ENCODE measurements at regions of chr14 and their contacts with region 1.

Region 1: DNA sequence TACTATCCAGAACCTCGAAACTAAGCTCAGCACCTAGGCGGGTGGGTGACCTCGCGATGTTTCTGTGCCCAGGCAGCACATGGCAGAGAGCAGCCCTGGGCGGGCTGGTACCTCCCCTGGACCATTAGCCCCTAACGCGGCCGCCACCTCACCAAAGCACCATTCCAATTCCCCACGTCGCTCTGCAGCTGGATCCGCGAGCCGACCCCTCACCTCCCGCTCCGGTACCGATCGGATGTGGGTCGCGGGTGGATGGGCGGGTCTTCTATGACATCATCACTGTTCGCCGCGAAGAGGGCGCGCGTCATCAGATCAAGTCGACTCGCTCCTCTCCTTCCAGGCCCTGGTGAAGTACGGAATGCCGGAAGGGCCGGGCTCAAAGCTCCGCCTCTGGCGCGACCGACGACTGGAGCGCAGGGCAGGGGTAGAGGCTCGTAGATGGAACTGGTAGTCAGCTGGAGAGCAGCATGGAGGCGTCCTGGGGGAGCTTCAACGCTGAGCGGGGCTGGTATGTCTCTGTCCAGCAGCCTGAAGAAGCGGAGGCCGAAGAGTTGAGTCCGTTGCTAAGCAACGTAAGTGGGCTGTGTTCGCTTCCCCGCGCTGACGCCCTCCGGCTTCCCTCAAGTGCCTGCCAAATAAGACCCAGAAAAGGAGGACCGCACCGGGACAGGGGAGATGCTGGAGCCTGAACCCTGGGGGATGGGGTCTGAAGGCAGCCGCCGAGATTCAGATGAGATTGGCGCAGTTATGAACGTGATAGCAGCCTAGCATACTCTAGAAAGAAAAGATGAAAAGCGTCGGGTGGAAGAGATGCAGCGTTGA is at the starts of genes SLC38A6 and TRMT5:
- DNase-seq: peak; percentile 84
- H3K4me3 ChIP-seq: peak within 1 kb of the TSS; percentile 83
- CTCF ChIP-seq: no peak

Region 2: GRCh38 chr14:61025251-61026223 is 44.5 kb after region 1 on chr14:
- CTCF ChIA-PET with region 1: interaction called, 11 read pairs
- POLR2A ChIA-PET with region 1: no interaction called
- DNase-seq: no peak
- H3K4me3 ChIP-seq: no peak overlapping the region
- CTCF ChIP-seq: peak; percentile 70

Region 3: GRCh38 chr14:61252369-61253063 is 271.5 kb after region 1 on chr14:
- CTCF ChIA-PET with region 1: interaction called, 14 read pairs
- POLR2A ChIA-PET with region 1: no interaction called
- DNase-seq: peak; percentile 95
- H3K4me3 ChIP-seq: no peak overlapping the region
- CTCF ChIP-seq: peak; percentile 73

Measured in AG04449 (cell line).